ENCODE measurements at regions of chr2 and their contacts with region 1.

Region 1: GRCh38 chr2:206981739-206982340 is 42.5 kb downstream of the CPO start:
- DNase-seq: peak; percentile 61 to 91 (median 72)
- H3K4me3 ChIP-seq: no peak overlapping the region
- H3K27ac ChIP-seq: no peak overlapping the region
- H3K4me1 ChIP-seq: peaks cover 0 to 17% of the 10 kb centered on the region in 2 donors
- H3K27me3 ChIP-seq: no peaks in the 10 kb centered on the region
- CTCF ChIP-seq: peak; percentile 42 to 86 (median 72)
- POLR2A ChIP-seq: no peak

Region 2: GRCh38 chr2:206693399-206694137 is 288.3 kb before region 1 on chr2:
- intact Hi-C with region 1: loop called (anchors 10 kb)
- DNase-seq: peak in 5 of 7 donors; percentile 20 to 41 (median 31)
- H3K4me3 ChIP-seq: no peak overlapping the region
- H3K27ac ChIP-seq: no peak overlapping the region
- H3K4me1 ChIP-seq: no peaks in the 10 kb centered on the region
- H3K27me3 ChIP-seq: no peaks in the 10 kb centered on the region
- CTCF ChIP-seq: peak; percentile 51 to 74 (median 66)
- POLR2A ChIP-seq: no peak

Region 3: DNA sequence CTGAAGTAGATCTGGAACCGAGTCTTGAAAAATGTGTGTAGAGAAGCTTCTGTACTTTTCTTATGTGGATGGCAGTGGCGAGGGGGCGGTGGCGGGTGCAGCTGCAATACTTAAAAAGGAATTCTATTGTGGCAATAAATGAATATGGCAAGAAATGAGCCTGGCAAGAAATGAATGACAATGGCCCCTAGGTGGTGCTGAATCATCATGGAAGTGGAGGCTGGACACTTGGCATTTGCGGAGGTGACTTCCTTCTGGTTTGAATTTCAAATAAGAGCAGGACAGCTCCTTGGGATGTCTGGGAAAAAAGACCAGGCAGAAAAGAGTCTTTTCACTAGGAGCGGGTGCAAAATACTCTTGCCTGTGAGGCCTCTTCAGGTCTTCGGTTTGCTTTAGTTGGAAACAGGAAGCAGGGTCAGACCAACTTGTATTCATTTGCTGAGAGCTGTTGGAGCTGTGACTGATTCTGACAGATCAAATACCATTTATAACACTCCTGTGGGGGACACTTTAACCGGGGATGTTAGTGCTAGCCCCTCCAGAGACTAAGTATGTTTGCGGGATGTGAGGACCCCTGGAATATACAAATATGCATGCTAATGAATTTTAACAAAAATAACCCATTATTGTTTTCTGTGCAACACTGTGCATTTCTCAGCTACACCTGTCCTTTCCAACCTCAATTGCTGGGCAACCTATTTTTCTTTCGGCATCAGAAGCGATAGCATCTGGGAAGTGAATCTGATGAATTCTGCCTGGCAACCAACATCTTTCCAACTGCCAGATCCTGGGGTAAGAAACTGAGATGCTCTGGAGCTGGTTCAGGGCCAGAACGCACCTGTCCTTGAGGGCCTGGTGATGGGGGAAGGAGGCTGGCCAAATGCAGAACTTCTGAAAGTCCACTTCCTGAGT is 181.1 kb before region 1 on chr2:
- intact Hi-C with region 1: loop called (anchors 5 to 10 kb)
- DNase-seq: peak; percentile 60 to 82 (median 68)
- H3K4me3 ChIP-seq: no peak overlapping the region
- H3K27ac ChIP-seq: no peak overlapping the region
- H3K4me1 ChIP-seq: no peaks in the 10 kb centered on the region
- H3K27me3 ChIP-seq: no peaks in the 10 kb centered on the region
- CTCF ChIP-seq: peak; percentile 29 to 81 (median 78)
- POLR2A ChIP-seq: no peak

Region 4: GRCh38 chr2:207149249-207150213 is 167.7 kb after region 1 on chr2:
- intact Hi-C with region 1: loop called in 1 of 2 experiments (anchors 10 kb)
- DNase-seq: peak in 3 of 7 donors; percentile 37 to 66 (median 37)
- H3K4me3 ChIP-seq: no peak overlapping the region
- H3K27ac ChIP-seq: peak overlapping the region in 1 of 5 donors; percentile 3
- H3K4me1 ChIP-seq: peaks cover 38 to 75% of the 10 kb centered on the region in 2 donors
- H3K27me3 ChIP-seq: no peaks in the 10 kb centered on the region
- CTCF ChIP-seq: no peak
- POLR2A ChIP-seq: no peak

Region 5: GRCh38 chr2:207341804-207342203 is 360.0 kb after region 1 on chr2:
- intact Hi-C with region 1: loop called in 1 of 2 experiments (anchors 10 kb)
- DNase-seq: peak in 1 of 7 donors; percentile 6
- H3K4me3 ChIP-seq: no peak overlapping the region
- H3K27ac ChIP-seq: no peak overlapping the region
- H3K4me1 ChIP-seq: no peaks in the 10 kb centered on the region
- H3K27me3 ChIP-seq: no peaks in the 10 kb centered on the region
- CTCF ChIP-seq: peak in 3 of 6 experiments; percentile 10 to 13 (median 12)
- POLR2A ChIP-seq: no peak

Region 6: GRCh38 chr2:207473049-207473930 is 491.4 kb after region 1 on chr2:
- intact Hi-C with region 1: loop called (anchors 5 kb)
- DNase-seq: peak in 6 of 7 donors; percentile 16 to 83 (median 54)
- H3K4me3 ChIP-seq: no peak overlapping the region
- H3K27ac ChIP-seq: no peak overlapping the region
- H3K4me1 ChIP-seq: peaks cover 0 to 7% of the 10 kb centered on the region in 2 donors
- H3K27me3 ChIP-seq: no peaks in the 10 kb centered on the region
- CTCF ChIP-seq: peak; percentile 17 to 73 (median 59)
- POLR2A ChIP-seq: no peak

Measured in adrenal gland (tissue), 19 donors.